OCI-LY7 (cell line): ENCODE measurements at regions of chr11 and their contacts with region 1.

Region 1: DNA sequence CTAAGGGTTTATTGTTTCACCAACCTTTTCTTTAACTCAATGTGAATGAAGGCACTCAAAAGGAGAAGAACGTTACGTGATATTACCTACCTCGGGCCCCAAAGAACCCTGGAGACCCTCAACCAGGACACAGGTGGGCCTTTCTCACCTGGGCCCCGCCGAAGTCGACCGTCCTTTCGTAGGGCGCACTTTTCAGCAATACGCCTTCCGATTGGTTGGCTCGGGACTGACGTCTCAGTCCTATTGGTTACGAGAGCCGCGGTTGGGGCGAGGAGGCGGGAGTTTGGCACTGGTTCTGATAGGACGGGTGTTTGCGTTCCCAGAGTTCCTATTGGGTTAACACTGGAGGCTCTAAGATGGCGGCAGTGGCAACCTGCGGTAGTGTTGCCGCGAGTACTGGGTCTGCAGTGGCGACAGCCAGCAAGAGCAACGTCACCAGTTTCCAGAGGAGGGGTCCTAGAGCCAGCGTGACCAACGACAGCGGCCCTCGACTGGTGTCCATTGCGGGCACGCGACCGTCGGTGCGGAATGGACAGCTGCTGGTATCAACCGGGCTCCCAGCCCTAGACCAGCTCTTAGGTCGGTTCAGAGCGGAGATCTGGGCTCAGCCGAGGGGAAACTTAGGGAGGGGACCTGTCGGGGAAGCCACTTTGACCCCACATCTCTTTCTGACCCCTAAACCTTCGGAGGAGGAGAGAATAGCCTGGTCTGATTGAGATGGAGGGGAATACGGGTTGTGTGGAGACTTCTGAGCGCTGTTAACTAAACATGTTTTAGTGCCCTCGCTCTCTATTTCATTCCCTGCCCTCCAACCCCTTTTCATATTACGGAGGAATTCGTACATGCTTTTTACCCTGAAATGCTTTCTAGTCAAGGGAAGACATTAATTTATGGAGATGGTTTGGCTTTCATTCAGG is at the starts of genes ELP4 and IMMP1L:
- DNase-seq: peak; percentile 96
- H3K4me3 ChIP-seq: peak within 1 kb of the TSS; percentile 92
- H3K27ac ChIP-seq: peak within 1 kb of the TSS; percentile 39
- H3K4me1 ChIP-seq: peaks cover 24% of the 10 kb centered on the region
- CTCF ChIP-seq: no peak
- total RNA-seq, gene ELP4: 27.6 and 27.9 TPM in 2 replicates
- total RNA-seq, gene IMMP1L: 15.8 and 27.9 TPM in 2 replicates

Region 2: GRCh38 chr11:30683176-30683575 is 826.5 kb before region 1 on chr11:
- CTCF ChIA-PET with region 1: no interaction called
- POLR2A ChIA-PET with region 1: no interaction called
- intact Hi-C with region 1: no loop called
- DNase-seq: no peak
- H3K4me3 ChIP-seq: no peak overlapping the region
- H3K27ac ChIP-seq: no peak overlapping the region
- H3K4me1 ChIP-seq: no peaks in the 10 kb centered on the region
- CTCF ChIP-seq: no peak

Region 3: GRCh38 chr11:31369348-31370329 is 140.0 kb before region 1 on chr11 and contains the starts of genes DCDC1 and DNAJC24:
- CTCF ChIA-PET with region 1: no interaction called
- POLR2A ChIA-PET with region 1: no interaction called
- intact Hi-C with region 1: loop called (anchors 2 kb)
- DNase-seq: peak; percentile 96
- H3K4me3 ChIP-seq: peak within 1 kb of the TSS; percentile 79
- H3K27ac ChIP-seq: peak within 1 kb of the TSS; percentile 73
- H3K4me1 ChIP-seq: peaks cover 14% of the 10 kb centered on the region
- CTCF ChIP-seq: no peak
- total RNA-seq, gene DCDC1: 0.13 TPM in 1 of 2 replicates, not detected in the other
- total RNA-seq, gene DNAJC24: 11.6 and 12.8 TPM in 2 replicates